Activated B cell treated with CpG ODN at 0.5 μM for 24 hours (primary cell): ENCODE measurements at regions of chr12 and their contacts with region 1.

Region 1: DNA sequence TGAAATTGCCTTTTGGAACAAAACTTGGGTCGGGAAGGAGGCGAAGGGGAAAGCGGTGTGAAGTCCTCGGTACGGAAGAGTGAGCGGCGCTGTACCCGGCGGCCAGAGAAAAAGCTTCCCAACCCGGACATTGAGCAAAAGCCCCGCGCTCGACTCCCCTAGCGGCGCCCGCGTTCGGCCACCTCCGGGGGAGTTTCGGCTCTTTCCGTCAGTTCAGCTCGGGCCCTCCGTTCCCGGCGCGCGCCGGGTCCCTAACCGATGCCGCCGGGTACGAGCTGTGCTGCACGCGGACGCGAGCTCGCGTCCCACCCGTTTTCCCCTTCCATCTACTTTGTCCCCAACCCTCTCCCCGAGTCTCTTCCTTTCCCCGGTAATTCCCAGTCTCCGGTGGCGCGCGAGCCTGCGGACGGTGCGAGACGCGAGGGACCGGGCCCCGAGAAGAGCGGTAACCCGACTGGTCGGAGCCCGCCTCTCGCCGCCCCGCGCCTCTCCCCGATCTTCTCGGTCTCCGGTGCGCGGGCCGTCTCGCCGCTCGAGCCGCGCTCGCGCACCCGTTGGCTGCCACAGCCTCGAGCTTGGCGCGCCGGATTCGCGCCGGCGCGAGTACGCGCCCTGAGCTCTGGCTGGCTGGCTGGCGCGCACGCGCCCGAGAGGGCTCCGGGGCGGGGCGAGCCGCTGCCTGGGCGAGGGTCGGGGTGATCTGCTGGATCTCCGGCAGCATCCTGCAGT is 446 bp upstream of the SPATS2 start:
- DNase-seq: peak; percentile 87
- ATAC-seq: peak; percentile 80
- H3K4me3 Mint-ChIP-seq: peak overlapping the region; percentile 99
- H3K27ac Mint-ChIP-seq: peak overlapping the region; percentile 98
- H3K4me1 Mint-ChIP-seq: peaks cover 51% of the 10 kb centered on the region
- H3K27me3 Mint-ChIP-seq: no peaks in the 10 kb centered on the region
- CTCF ChIP-seq: no peak

Region 2: GRCh38 chr12:49322708-49323523 is 43.9 kb before region 1 on chr12 and contains the start of gene TROAP:
- CTCF ChIA-PET with region 1: no interaction called
- POLR2A ChIA-PET with region 1: interaction called, 14 read pairs
- intact Hi-C with region 1: loop called (anchors 1 kb)
- DNase-seq: peak; percentile 85
- ATAC-seq: peak; percentile 99
- H3K4me3 Mint-ChIP-seq: peak within 1 kb of the TSS; percentile 94
- H3K27ac Mint-ChIP-seq: peak within 1 kb of the TSS; percentile 73
- H3K4me1 Mint-ChIP-seq: peaks cover 18% of the 10 kb centered on the region
- H3K27me3 Mint-ChIP-seq: no peaks in the 10 kb centered on the region
- CTCF ChIP-seq: no peak
- total RNA-seq, gene TROAP: 2.0 and 3.1 TPM in 2 replicates

Region 3: DNA sequence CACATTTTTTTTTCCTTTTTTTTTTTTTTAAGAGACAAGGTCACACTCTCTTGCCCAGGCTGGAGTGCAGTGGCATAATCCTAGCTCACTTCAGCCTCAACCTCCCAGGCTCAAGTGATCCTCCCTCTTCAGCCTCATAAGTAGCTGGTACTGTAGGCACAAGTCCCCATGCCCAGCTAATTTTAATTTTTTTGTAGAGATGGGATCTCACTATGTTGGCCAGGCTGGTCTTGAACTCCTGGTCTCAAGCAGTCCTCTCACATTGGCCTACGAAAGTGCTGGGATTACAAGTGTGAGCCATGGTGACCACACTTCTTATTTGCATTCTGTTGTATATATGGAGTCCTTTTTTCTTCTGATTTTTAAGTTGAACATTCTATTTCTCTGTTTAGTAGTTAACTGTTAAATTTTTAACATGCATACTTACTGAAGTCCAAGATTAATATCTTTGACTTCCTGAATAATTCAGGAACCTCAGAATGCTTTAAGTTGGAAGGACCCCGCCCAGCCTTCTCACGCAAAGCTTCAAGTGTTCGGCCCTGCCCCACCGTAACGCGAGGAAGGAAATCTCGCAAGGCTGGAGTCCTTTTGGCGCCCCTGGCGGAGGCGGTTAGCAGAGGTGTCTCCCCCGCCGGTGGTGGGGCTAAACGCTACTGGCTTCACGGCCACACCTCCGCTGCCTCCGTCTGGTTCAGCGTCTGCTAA is 22.0 kb after region 1 on chr12:
- CTCF ChIA-PET with region 1: interaction called, 6 read pairs
- POLR2A ChIA-PET with region 1: interaction called, 6 read pairs
- intact Hi-C with region 1: loop called (anchors 2 kb)
- DNase-seq: peak; percentile 49
- ATAC-seq: peak; percentile 94
- H3K4me3 Mint-ChIP-seq: peak overlapping the region; percentile 50
- H3K27ac Mint-ChIP-seq: no peak overlapping the region
- H3K4me1 Mint-ChIP-seq: peaks cover 4% of the 10 kb centered on the region
- H3K27me3 Mint-ChIP-seq: no peaks in the 10 kb centered on the region
- CTCF ChIP-seq: no peak

Region 4: DNA sequence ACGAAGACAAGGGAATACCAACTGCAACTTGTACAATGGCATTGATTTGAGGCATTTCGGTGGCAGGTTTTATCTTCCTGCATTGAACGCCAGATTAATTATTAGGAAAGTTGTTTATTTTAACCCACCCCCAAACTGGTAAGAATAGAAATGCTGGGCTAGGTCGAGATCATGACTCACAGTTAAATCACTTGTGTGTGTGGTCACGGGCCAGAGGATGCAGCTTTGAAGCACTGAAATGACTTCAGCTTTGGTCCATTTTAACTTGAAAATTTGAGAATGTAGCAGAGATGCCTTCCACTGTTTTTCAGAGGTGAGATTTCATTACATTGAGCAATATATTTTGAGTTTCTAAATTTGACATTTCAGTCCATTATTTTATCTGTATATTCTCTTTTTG is 148.4 kb after region 1 on chr12:
- CTCF ChIA-PET with region 1: interaction called, 345 read pairs
- POLR2A ChIA-PET with region 1: interaction called, 7 read pairs
- intact Hi-C with region 1: no loop called
- DNase-seq: no peak
- ATAC-seq: no peak
- H3K4me3 Mint-ChIP-seq: no peak overlapping the region
- H3K27ac Mint-ChIP-seq: no peak overlapping the region
- H3K4me1 Mint-ChIP-seq: no peaks in the 10 kb centered on the region
- H3K27me3 Mint-ChIP-seq: no peaks in the 10 kb centered on the region
- CTCF ChIP-seq: no peak

Region 5: DNA sequence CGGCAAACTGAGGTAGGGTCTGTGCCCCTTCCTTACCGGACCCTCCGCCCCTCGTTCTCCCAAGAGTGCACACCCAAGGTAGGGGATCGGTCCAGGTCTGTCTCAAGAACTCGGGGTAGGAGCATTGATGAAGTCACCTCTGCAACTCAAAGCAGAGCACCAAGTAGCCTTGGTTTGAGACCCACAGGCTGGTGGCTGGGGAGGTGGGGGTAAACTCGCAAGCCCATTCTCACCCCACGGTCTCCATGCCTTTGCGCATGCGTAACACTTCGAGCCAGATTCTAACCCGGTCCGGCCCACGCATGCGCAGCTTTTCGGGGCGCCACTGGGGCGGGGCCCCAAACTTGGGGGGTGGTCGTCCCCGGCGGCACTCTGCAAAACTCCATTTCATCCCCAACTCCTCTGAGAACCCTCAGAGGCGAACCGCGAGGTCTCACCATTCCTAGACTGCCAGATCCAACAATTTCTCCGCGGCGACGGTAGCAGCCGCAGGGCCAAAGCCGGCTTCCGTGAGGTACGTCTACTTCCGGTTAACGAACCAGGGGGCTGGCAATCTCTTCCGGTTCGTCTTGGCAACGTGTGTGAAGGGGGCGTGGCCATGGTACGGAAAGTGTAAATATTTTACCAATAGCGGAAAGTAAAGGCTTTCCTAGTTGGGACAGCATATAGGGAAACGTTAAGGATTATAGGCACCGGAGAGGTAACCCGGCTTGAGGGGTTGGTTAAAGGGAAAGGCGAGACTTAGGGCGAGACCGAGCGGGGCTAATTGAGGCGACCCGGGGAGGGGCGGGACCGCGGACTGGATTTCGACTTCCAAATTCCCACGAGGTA is 201.0 kb after region 1 on chr12 and contains the start of gene MCRS1:
- CTCF ChIA-PET with region 1: no interaction called
- POLR2A ChIA-PET with region 1: interaction called, 10 read pairs
- intact Hi-C with region 1: no loop called
- DNase-seq: peak; percentile 80
- ATAC-seq: peak; percentile 88
- H3K4me3 Mint-ChIP-seq: peak within 1 kb of the TSS; percentile 97
- H3K27ac Mint-ChIP-seq: peak within 1 kb of the TSS; percentile 100
- H3K4me1 Mint-ChIP-seq: peaks cover 30% of the 10 kb centered on the region
- H3K27me3 Mint-ChIP-seq: no peaks in the 10 kb centered on the region
- CTCF ChIP-seq: no peak
- total RNA-seq, gene MCRS1: 82.2 and 84.2 TPM in 2 replicates